A549 (cell line): ENCODE measurements at regions of chr1 and their contacts with region 1.

Region 1: GRCh38 chr1:24635195-24635843 is 7.8 kb upstream of the SRRM1 start:
- DNase-seq: peak; percentile 60 to 76
- ATAC-seq: peak; percentile 77 to 91; a peak in 5 of 6 replicates
- H3K4me3 ChIP-seq: no peak overlapping the region
- H3K27ac ChIP-seq: no peak overlapping the region
- H3K4me1 ChIP-seq: peaks cover 4% of the 10 kb centered on the region; the same call in 1 of the 3 replicates
- CTCF ChIP-seq: peak; percentile 69
- EP300 ChIP-seq: no peak
- POLR2A ChIP-seq: no peak
- RAD21 ChIP-seq: peak; percentile 74 to 81

Region 2: GRCh38 chr1:24415334-24415909 is 219.9 kb before region 1 on chr1 and contains the start of gene NIPAL3:
- CTCF ChIA-PET with region 1: interaction called, 13 read pairs
- POLR2A ChIA-PET with region 1: no interaction called
- DNase-seq: peak; percentile 85 to 99
- ATAC-seq: peak; percentile 91 to 94
- H3K4me3 ChIP-seq: peak within 1 kb of the TSS; percentile 67
- H3K27ac ChIP-seq: peak within 1 kb of the TSS; percentile 64 to 95
- H3K4me1 ChIP-seq: peaks cover 51% of the 10 kb centered on the region
- CTCF ChIP-seq: peak; percentile 65
- EP300 ChIP-seq: no peak
- POLR2A ChIP-seq: no peak
- RAD21 ChIP-seq: peak; percentile 48 to 61
- polyA plus RNA-seq, gene NIPAL3: 10.4 and 14.7 TPM in 2 replicates

Region 3: GRCh38 chr1:24594154-24594553 is 41.2 kb before region 1 on chr1:
- CTCF ChIA-PET with region 1: interaction called, 11 read pairs
- POLR2A ChIA-PET with region 1: no interaction called
- DNase-seq: no peak
- ATAC-seq: no peak
- H3K4me3 ChIP-seq: no peak overlapping the region
- H3K27ac ChIP-seq: no peak overlapping the region
- H3K4me1 ChIP-seq: peaks cover 5% of the 10 kb centered on the region; the same call in 2 of the 3 replicates
- CTCF ChIP-seq: no peak
- EP300 ChIP-seq: no peak
- POLR2A ChIP-seq: no peak
- RAD21 ChIP-seq: no peak